Astrocyte of the cerebellum (primary cell): ENCODE measurements at regions of chr3 and their contacts with region 1.

Region 1: DNA sequence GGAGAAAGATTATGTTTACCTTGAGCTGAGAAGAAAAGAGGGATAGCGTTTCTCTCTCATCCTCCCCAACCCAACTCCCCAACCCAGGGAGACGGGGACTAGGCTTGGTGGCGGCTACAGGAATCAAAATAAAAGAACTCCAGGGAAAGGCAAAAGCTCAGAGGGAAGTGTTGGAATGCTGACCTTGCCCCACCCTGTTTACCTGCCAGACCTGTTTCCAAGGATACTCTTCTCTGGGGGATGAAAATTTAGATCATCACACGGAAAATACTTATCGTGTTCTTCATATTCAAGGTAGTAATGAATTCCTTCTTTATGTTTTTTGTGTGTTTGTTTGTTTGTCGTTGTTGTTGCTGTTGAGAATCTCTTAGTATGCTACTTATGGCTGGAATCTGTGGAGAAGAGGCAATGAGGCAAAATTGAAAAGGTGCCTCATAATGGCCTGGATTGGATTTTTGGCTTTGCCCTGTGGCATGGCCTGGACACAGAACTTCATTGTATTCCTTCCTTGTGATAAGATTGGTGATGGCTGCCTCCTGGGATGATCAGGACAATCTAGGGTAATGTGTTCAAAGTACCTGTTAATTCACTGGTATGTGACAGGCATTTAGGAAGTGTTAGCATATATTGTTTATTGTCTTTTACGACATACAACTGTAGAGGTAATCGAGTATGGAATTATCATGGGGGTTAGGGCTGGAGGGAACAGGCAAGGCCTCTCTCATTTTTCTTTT is 11.1 kb upstream of the TPRG1 start:
- DNase-seq: no peak
- H3K4me3 ChIP-seq: no peak overlapping the region
- CTCF ChIP-seq: no peak

Region 2: GRCh38 chr3:189094539-189094938 is 66.2 kb before region 1 on chr3:
- in situ Hi-C with region 1: loop called (anchors 5 kb)
- DNase-seq: no peak
- H3K4me3 ChIP-seq: no peak overlapping the region
- CTCF ChIP-seq: no peak